SK-N-SH (cell line): ENCODE measurements at regions of chrX and their contacts with region 1.

Region 1: GRCh38 chrX:111098874-111099273 is 2.9 kb downstream of the PAK3 start:
- DNase-seq: peak; percentile 68
- H3K4me3 ChIP-seq: no peak overlapping the region; a peak in 1 of 4 replicates
- H3K27ac ChIP-seq: no peak overlapping the region
- H3K4me1 ChIP-seq: peaks cover 0 to 11% of the 10 kb centered on the region in 2 experiments; a peak in 1 of 4 replicates
- H3K27me3 ChIP-seq: peaks cover 7% of the 10 kb centered on the region
- CTCF ChIP-seq: peak; percentile 76
- EP300 ChIP-seq: no peak
- RAD21 ChIP-seq: peak; percentile 50

Region 2: GRCh38 chrX:110853610-110854009 is 245.3 kb before region 1 on chrX:
- CTCF ChIA-PET with region 1: interaction called, 18 read pairs
- POLR2A ChIA-PET with region 1: no interaction called
- DNase-seq: peak; percentile 20
- H3K4me3 ChIP-seq: no peak overlapping the region
- H3K27ac ChIP-seq: no peak overlapping the region
- H3K4me1 ChIP-seq: no peaks in the 10 kb centered on the region
- H3K27me3 ChIP-seq: no peaks in the 10 kb centered on the region
- CTCF ChIP-seq: peak; percentile 37
- EP300 ChIP-seq: no peak
- RAD21 ChIP-seq: peak; percentile 48

Region 3: GRCh38 chrX:111109896-111110791 is 11.3 kb after region 1 on chrX:
- CTCF ChIA-PET with region 1: interaction called, 32 read pairs
- POLR2A ChIA-PET with region 1: no interaction called
- DNase-seq: no peak
- H3K4me3 ChIP-seq: no peak overlapping the region
- H3K27ac ChIP-seq: no peak overlapping the region
- H3K4me1 ChIP-seq: no peaks in the 10 kb centered on the region
- H3K27me3 ChIP-seq: no peaks in the 10 kb centered on the region
- CTCF ChIP-seq: no peak
- EP300 ChIP-seq: no peak
- RAD21 ChIP-seq: no peak

Region 4: GRCh38 chrX:111244235-111244750 is 145.4 kb after region 1 on chrX:
- CTCF ChIA-PET with region 1: interaction called, 10 read pairs
- POLR2A ChIA-PET with region 1: no interaction called
- DNase-seq: peak; percentile 50
- H3K4me3 ChIP-seq: no peak overlapping the region
- H3K27ac ChIP-seq: no peak overlapping the region
- H3K4me1 ChIP-seq: no peaks in the 10 kb centered on the region
- H3K27me3 ChIP-seq: peaks cover 29% of the 10 kb centered on the region
- CTCF ChIP-seq: peak; percentile 75
- EP300 ChIP-seq: no peak
- RAD21 ChIP-seq: peak; percentile 81